Right ventricle myocardium superior (tissue), 1 donor: ENCODE measurements at regions of chr5 and their contacts with region 1.

Region 1: GRCh38 chr5:96776621-96777020 is 31.1 kb downstream of the ERAP1 start:
- DNase-seq: no peak
- ATAC-seq: no peak

Region 2: DNA sequence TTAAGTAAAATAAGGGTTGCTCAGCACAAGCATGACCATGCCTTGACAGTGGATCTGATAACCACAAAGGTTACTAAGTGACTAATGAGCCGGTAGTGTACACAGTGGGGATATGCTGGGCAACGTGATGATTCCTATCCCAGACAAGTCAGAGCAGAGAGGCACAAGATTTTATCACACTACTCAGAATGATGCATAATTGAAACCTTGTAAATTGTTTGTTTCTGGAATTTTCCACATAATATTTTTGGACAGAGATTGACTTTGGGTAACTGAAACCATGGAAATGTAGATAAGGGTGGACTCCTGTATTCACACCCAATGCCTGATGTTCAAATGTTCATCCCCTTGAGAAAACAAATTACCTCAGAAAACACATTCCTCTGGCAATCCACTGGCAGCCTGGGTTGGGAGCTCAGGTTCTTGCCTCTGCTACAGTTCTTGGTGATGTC is 47.3 kb after region 1 on chr5:
- intact Hi-C with region 1: no loop called
- DNase-seq: no peak
- ATAC-seq: no peak

Region 3: GRCh38 chr5:96934708-96935558 is 158.3 kb after region 1 on chr5:
- intact Hi-C with region 1: no loop called
- DNase-seq: peak; percentile 97
- ATAC-seq: peak; percentile 90

Region 4: DNA sequence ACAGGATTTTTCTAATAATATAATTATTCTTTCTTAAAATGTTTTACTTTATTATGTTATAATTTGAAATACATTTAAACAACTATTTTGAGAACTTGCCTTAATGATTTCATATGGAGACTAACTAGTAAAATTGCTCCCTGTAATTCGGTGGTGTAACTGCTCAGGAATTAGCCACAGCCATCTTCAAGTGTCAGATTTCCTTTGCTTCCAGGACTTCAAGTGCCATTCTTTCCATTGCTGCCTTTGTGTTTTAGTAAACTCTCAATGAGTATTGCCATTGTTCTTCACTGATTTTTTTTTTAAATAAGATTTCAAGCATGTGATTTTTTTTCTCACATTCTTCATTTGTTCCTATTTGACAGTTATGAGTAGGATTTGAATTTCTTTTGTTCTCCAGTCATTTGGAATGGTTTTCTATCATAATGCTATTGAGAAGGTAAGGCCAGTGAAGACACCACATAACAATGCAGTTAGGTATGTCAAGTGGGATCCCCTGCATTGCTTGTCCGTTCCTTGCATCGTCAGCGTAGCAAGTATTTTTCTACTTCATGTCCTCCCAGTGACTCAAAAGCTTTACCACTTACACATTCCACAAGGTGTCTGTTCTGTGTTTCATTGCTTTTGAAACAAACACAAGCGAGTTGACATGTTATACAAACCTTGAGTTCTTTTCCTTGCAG is 243.0 kb after region 1 on chr5:
- intact Hi-C with region 1: loop called (anchors 10 kb)
- DNase-seq: no peak
- ATAC-seq: no peak